Activated CD8-positive, alpha-beta memory T cell treated with anti-CD3 and anti-CD28 coated beads, Interleukin-2, amount 10 ng/mL, durations not matched to agents 7 days and 5 days (primary cell): ENCODE measurements at regions of chrX and their contacts with region 1.

Region 1: DNA sequence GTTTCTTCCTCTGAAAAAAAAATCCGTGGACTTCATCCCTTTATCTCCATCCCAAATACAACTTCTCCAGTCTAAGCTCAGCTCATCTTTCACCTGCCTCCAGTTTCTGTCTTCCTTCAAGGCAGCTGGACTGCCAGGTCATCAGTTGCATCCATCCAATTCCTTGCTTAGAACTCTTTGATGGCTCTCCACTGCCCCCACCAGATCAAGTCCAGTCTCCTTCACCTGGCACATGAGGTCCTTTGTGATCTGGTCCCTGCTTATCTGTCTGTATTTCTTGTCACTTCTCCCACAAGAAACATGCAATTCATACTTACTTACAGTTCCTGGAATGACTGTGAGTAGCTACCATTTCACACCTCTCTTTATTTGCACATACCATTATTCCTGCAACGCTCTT is 33.8 kb downstream of the OTUD6A start:
- DNase-seq: no peak
- ATAC-seq: no peak
- H3K4me3 Mint-ChIP-seq: no peak overlapping the region
- H3K27ac Mint-ChIP-seq: no peak overlapping the region
- H3K4me1 Mint-ChIP-seq: no peaks in the 10 kb centered on the region
- H3K27me3 Mint-ChIP-seq: peaks cover 3% of the 10 kb centered on the region

Region 2: GRCh38 chrX:69718102-69718501 is 377.9 kb before region 1 on chrX:
- CTCF ChIA-PET with region 1: no interaction called
- DNase-seq: no peak
- ATAC-seq: no peak
- H3K4me3 Mint-ChIP-seq: no peak overlapping the region
- H3K27ac Mint-ChIP-seq: no peak overlapping the region
- H3K4me1 Mint-ChIP-seq: no peaks in the 10 kb centered on the region
- H3K27me3 Mint-ChIP-seq: no peaks in the 10 kb centered on the region

Region 3: DNA sequence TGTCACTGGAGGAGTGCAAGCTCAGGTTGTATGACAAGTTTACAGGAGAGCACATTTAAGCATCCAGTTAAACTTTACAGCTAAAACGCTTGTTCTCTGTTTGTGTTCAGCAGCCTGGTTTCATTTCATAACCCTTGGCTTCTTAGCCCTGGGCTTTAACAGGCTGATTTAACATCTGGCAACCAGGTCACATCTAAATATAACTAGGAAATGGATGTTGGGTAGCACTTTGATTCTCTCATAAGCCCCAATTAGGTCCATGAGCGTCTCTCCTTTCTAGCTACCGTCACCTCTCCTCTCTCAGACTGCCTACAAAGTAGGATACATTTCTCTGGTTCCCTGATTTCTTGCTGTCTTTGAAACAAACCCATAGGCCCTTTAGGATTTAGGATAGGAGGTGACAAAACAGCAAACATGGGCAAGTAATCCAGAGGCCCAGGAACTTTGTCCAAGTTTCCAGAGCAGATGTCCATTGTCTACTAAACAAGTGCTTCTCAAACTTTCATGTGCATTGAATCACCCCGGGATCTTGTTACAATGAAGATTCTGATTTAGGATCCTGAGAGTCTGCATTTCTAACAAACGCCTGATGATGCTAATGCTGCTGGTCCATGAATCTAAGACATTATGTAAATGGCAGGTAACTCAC is 11.3 kb before region 1 on chrX:
- CTCF ChIA-PET with region 1: interaction called, 11 read pairs
- DNase-seq: no peak
- ATAC-seq: no peak
- H3K4me3 Mint-ChIP-seq: no peak overlapping the region
- H3K27ac Mint-ChIP-seq: no peak overlapping the region
- H3K4me1 Mint-ChIP-seq: no peaks in the 10 kb centered on the region
- H3K27me3 Mint-ChIP-seq: no peaks in the 10 kb centered on the region